ENCODE measurements at regions of chr9 and their contacts with region 1.

Region 1: GRCh38 chr9:89428901-89429890 is 68.7 kb downstream of the SEMA4D start:
- DNase-seq: peak; percentile 53 to 74
- H3K4me3 ChIP-seq: no peak overlapping the region
- H3K27ac ChIP-seq: peak overlapping the region; percentile 14; the same call in 1 of the 2 replicates
- H3K4me1 ChIP-seq: peaks cover 9 to 30% (median 19%) of the 10 kb centered on the region in 4 experiments
- H3K27me3 ChIP-seq: no peaks in the 10 kb centered on the region
- CTCF ChIP-seq: peak in 2 of 3 experiments; percentile 91; a peak in 3 of 4 replicates
- EP300 ChIP-seq: no peak
- POLR2A ChIP-seq: no peak
- RAD21 ChIP-seq: peak; percentile 80 to 90

Region 2: GRCh38 chr9:89400403-89401116 is 28.6 kb before region 1 on chr9:
- CTCF ChIA-PET with region 1: interaction called, 12 read pairs
- POLR2A ChIA-PET with region 1: no interaction called
- DNase-seq: no peak
- H3K4me3 ChIP-seq: no peak overlapping the region
- H3K27ac ChIP-seq: no peak overlapping the region
- H3K4me1 ChIP-seq: no peaks in the 10 kb centered on the region
- H3K27me3 ChIP-seq: no peaks in the 10 kb centered on the region
- CTCF ChIP-seq: no peak
- EP300 ChIP-seq: no peak
- POLR2A ChIP-seq: no peak
- RAD21 ChIP-seq: no peak

Region 3: DNA sequence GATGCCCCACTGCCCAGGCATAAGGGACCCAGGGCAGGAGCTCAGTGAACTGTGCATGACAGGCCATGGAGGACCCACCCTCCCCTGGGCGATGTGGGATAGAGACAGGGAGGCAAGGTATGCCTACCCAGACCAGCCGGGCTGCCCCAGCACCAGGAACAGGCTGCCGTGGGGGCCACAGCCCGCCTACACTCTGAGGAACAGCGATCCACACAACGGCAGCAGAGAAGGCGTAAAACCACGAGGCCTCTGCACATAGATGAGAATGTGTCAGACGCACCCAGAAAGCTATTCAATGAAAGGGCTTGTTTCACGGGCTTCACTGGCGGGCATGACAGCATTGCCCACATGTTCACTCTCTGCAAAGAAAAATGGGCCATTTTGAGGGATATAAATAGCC is 19.2 kb after region 1 on chr9:
- CTCF ChIA-PET with region 1: interaction called, 19 read pairs
- POLR2A ChIA-PET with region 1: interaction called, 4 read pairs
- DNase-seq: no peak
- H3K4me3 ChIP-seq: no peak overlapping the region
- H3K27ac ChIP-seq: no peak overlapping the region
- H3K4me1 ChIP-seq: peaks cover 0 to 2% (median 0%) of the 10 kb centered on the region in 4 experiments; a peak in 1 of 7 replicates
- H3K27me3 ChIP-seq: no peaks in the 10 kb centered on the region
- CTCF ChIP-seq: no peak
- EP300 ChIP-seq: no peak
- POLR2A ChIP-seq: no peak
- RAD21 ChIP-seq: no peak

Region 4: DNA sequence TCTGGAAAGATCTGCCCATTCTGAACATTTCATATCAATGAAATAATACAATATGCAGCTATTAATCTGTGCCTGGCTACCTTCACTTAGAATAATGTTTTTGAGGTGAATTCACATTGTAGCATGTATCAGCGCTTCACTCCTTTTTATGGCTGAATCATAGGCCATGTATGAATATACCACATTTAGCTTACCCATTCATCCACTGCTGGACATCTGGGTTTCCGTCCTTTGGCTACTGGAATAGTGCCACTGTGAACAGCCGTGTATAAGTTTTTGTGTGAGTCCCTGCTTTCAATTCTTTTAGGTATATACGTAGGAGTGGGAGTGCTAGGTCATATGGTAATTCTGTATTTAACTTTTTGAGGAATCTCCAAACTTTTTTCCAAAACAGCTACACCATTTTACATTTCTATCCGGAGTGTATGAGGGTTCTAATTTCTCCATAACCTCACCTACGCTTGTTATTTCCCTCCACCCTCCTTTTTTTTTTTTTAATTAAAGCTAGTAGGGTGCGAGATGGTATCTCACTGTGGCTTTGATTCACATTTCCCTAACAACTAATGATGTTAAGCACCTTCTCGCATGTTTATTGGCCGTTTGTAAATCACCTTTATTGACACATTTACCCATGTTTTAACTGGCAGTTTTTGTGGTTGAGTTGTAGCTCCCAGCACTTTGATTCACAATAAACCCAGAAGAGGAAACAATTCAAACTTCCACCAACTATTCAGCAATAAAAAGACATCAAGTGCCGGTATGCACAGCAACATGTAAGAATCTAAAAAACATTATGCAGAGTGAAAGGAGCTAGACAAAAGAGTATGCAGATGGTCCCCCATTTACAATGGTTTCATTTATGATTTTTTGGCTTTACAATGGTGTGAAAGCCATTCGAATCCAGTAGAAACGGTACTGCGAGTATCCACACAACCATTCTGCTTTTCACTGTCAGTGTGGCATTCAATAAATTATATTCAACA is 60.6 kb after region 1 on chr9:
- CTCF ChIA-PET with region 1: interaction called, 18 read pairs
- POLR2A ChIA-PET with region 1: interaction called, 3 read pairs
- DNase-seq: no peak
- H3K4me3 ChIP-seq: no peak overlapping the region
- H3K27ac ChIP-seq: no peak overlapping the region
- H3K4me1 ChIP-seq: peaks cover 3 to 33% (median 13%) of the 10 kb centered on the region in 4 experiments; a peak in 6 of 7 replicates
- H3K27me3 ChIP-seq: no peaks in the 10 kb centered on the region
- CTCF ChIP-seq: no peak
- EP300 ChIP-seq: no peak
- POLR2A ChIP-seq: no peak
- RAD21 ChIP-seq: no peak

Region 5: DNA sequence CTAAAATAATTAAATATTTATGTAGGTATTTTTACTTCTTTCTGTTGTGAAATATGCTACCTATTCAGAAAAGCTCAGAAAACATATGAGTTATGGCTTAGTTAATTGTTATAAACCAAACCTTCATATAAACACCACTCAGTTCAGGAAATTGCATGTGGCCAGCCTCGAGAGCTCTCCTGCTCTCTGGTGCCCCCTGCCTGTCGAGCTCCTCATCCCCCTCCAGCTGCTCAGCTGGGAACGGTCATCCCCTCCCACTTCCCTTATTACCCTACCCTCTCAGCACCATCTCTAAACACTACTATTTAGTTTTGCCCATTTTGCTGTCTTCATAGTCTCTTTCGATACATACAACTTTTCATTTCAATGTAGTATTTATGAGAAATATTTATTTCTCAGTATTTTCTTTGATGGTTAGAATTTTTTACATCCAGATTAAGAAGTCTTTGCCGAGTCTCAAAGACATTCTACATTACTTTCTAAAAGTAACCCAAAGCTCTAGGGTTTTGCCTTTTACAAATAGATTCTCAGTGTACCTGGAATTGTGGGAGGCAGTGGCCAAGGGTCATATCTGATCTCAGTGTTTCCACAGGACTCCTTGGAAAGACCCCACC is 119.9 kb after region 1 on chr9:
- CTCF ChIA-PET with region 1: interaction called, 147 read pairs
- POLR2A ChIA-PET with region 1: interaction called, 14 read pairs
- DNase-seq: peak; percentile 29 to 90
- H3K4me3 ChIP-seq: no peak overlapping the region
- H3K27ac ChIP-seq: no peak overlapping the region
- H3K4me1 ChIP-seq: peaks cover 0 to 11% (median 7%) of the 10 kb centered on the region in 4 experiments; a peak in 5 of 7 replicates
- H3K27me3 ChIP-seq: no peaks in the 10 kb centered on the region
- CTCF ChIP-seq: peak; percentile 81 to 97 (median 93)
- EP300 ChIP-seq: no peak
- POLR2A ChIP-seq: no peak
- RAD21 ChIP-seq: peak; percentile 84 to 85

Region 6: DNA sequence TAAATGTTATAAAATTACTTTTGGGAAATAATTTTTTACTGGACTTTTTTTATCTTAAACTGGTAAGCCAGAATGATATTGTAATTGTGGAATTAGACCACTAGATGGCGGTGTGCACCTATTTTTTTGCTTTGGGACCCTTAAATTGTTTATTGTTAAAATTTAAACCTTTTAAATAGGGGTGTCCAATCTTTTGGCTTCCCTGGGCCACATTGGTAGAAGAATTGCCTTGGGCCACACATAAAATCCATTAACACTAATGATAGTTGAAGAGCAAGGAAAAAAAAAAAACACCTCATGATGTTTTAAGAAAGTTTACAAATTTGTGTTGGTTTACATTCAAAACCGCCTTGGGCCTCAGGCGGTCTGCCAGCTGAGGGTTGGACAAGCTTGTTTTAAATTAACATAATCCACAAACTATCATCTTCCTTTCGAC is 147.2 kb after region 1 on chr9:
- CTCF ChIA-PET with region 1: interaction called, 10 read pairs
- POLR2A ChIA-PET with region 1: no interaction called
- DNase-seq: no peak
- H3K4me3 ChIP-seq: no peak overlapping the region
- H3K27ac ChIP-seq: no peak overlapping the region
- H3K4me1 ChIP-seq: no peaks in the 10 kb centered on the region
- H3K27me3 ChIP-seq: no peaks in the 10 kb centered on the region
- CTCF ChIP-seq: peak in 2 of 3 experiments; percentile 32 to 43; a peak in 2 of 4 replicates
- EP300 ChIP-seq: no peak
- POLR2A ChIP-seq: no peak
- RAD21 ChIP-seq: peak; percentile 56 to 65

Region 7: DNA sequence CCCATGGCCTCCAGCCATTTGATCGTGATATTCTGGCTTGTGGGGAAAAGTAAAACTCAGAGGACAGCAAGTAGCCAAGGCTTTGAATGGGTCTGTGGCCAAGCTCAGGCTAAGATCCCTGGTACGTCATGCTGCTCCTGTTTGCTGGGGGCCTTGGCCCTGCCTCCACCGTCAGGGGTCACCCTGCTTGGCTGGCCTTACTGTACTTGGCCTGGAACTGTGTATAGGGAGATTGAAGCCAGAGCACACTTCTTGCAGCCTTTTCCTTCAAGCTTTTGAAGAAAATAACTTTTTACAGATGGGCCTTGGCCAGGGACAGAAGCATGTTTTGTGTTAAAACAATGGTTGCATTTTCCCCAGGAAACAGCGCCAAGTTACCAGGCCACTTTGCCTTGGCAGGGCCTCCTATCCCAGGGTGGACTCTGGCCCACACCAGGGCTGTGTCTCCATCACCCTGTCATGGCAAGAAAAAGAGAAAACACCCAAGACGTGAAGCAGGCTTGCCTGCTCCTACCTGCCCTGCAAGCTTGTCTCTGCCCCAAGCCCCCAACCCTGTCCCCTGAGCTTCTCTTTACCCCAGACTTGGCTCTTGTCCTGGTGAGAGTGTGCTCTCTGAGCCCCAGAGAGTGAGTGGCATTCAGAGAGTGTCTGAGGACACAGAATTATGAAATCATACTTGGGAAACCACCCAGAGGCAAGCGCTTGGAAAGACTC is 462.6 kb after region 1 on chr9:
- CTCF ChIA-PET with region 1: no interaction called
- POLR2A ChIA-PET with region 1: no interaction called
- DNase-seq: no peak
- H3K4me3 ChIP-seq: no peak overlapping the region
- H3K27ac ChIP-seq: no peak overlapping the region
- H3K4me1 ChIP-seq: no peaks in the 10 kb centered on the region; a peak in 1 of 7 replicates
- H3K27me3 ChIP-seq: no peaks in the 10 kb centered on the region
- CTCF ChIP-seq: no peak
- EP300 ChIP-seq: no peak
- POLR2A ChIP-seq: no peak
- RAD21 ChIP-seq: no peak